ENCODE measurements at regions of chr12 and their contacts with region 1.

Region 1: GRCh38 chr12:71636704-71637115 is 26.9 kb downstream of the ZFC3H1 start:
- DNase-seq: peak; percentile 36 to 78
- ATAC-seq: peak; percentile 52 to 78; a peak in 5 of 6 replicates
- H3K4me3 ChIP-seq: no peak overlapping the region
- H3K27ac ChIP-seq: no peak overlapping the region
- H3K4me1 ChIP-seq: no peaks in the 10 kb centered on the region
- CTCF ChIP-seq: peak; percentile 81
- EP300 ChIP-seq: no peak
- POLR2A ChIP-seq: no peak
- RAD21 ChIP-seq: peak; percentile 59 to 66; a peak in 4 of 5 replicates

Region 2: GRCh38 chr12:71415336-71416231 is 221.1 kb before region 1 on chr12:
- CTCF ChIA-PET with region 1: interaction called, 26 read pairs
- POLR2A ChIA-PET with region 1: no interaction called
- DNase-seq: peak; percentile 52 to 66
- ATAC-seq: peak; percentile 85 to 98
- H3K4me3 ChIP-seq: no peak overlapping the region
- H3K27ac ChIP-seq: no peak overlapping the region
- H3K4me1 ChIP-seq: no peaks in the 10 kb centered on the region
- CTCF ChIP-seq: peak; percentile 82
- EP300 ChIP-seq: no peak
- POLR2A ChIP-seq: no peak
- RAD21 ChIP-seq: peak; percentile 71 to 83

Region 3: GRCh38 chr12:71607494-71608330 is 29.0 kb before region 1 on chr12:
- CTCF ChIA-PET with region 1: interaction called, 10 read pairs
- POLR2A ChIA-PET with region 1: interaction called, 3 read pairs
- DNase-seq: no peak
- ATAC-seq: no peak
- H3K4me3 ChIP-seq: no peak overlapping the region
- H3K27ac ChIP-seq: no peak overlapping the region
- H3K4me1 ChIP-seq: no peaks in the 10 kb centered on the region
- CTCF ChIP-seq: no peak
- EP300 ChIP-seq: no peak
- POLR2A ChIP-seq: no peak
- RAD21 ChIP-seq: no peak